ENCODE measurements at regions of chr6 and their contacts with region 1.

Region 1: GRCh38 chr6:10404107-10404798 is 10.6 kb downstream of the TFAP2A start:
- DNase-seq: peak; percentile 90
- ATAC-seq: peak; percentile 94
- H3K4me3 ChIP-seq: peak overlapping the region; percentile 68
- H3K27ac ChIP-seq: peak overlapping the region; percentile 67
- H3K4me1 ChIP-seq: peaks cover 2% of the 10 kb centered on the region
- H3K27me3 ChIP-seq: peaks cover 2% of the 10 kb centered on the region
- CTCF ChIP-seq: peak; percentile 48
- POLR2A ChIP-seq: peak; percentile 30; the same call in 1 of the 2 replicates
- RAD21 ChIP-seq: peak; percentile 45

Region 2: GRCh38 chr6:8435160-8435852 is 1968.9 kb before region 1 on chr6 and contains the start of gene SLC35B3:
- CTCF ChIA-PET with region 1: no interaction called
- POLR2A ChIA-PET with region 1: no interaction called
- dilution Hi-C with region 1: no loop called
- in situ Hi-C with region 1: loop called (anchors 25 kb)
- intact Hi-C with region 1: no loop called
- DNase-seq: peak; percentile 88
- ATAC-seq: peak; percentile 97
- H3K4me3 ChIP-seq: peak within 1 kb of the TSS; percentile 91
- H3K27ac ChIP-seq: peak within 1 kb of the TSS; percentile 94
- H3K4me1 ChIP-seq: peaks cover 11% of the 10 kb centered on the region; the same call in 1 of the 2 replicates
- H3K27me3 ChIP-seq: no peaks in the 10 kb centered on the region
- CTCF ChIP-seq: no peak
- POLR2A ChIP-seq: peak; percentile 89
- RAD21 ChIP-seq: no peak
- total RNA-seq, gene SLC35B3: 19.0 and 33.9 TPM in 2 replicates

Region 3: GRCh38 chr6:9948678-9949077 is 455.6 kb before region 1 on chr6:
- CTCF ChIA-PET with region 1: no interaction called
- POLR2A ChIA-PET with region 1: no interaction called
- dilution Hi-C with region 1: no loop called
- in situ Hi-C with region 1: no loop called
- intact Hi-C with region 1: no loop called
- DNase-seq: no peak
- ATAC-seq: no peak
- H3K4me3 ChIP-seq: no peak overlapping the region
- H3K27ac ChIP-seq: no peak overlapping the region
- H3K4me1 ChIP-seq: no peaks in the 10 kb centered on the region
- H3K27me3 ChIP-seq: no peaks in the 10 kb centered on the region
- CTCF ChIP-seq: no peak
- POLR2A ChIP-seq: no peak
- RAD21 ChIP-seq: no peak

Region 4: DNA sequence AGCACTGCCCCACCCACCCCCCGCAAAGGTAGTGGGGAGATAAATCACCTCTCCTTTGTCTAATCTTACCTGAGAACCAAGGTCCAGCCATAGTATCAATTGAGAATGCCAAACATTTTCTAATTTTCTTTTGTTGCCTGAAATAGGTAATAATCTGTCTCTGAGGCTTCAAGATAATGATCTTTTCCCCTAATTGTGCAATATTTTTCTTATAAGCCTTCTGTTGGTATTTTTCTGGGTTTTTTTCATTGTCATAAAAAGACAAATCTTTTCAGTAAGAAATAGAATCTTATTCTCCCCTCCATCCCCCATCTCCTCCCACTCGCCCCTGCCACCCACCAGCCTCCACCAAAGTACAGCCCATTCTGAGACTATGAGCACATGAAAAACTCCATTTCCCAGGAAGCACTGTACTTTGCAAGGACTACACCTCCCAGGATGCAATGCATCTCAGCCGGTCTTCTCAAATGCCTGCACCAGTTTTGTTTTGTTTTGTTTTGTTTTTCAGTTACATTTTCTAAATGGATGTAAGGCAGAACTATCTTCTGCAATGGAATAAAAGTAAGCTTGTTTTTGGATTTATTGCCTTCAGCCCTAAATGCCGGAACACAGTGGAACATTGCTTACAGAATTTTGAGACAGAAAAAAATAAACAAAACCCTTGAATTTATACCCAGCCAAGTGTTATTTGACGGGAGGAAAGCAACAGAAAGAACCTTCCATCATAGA is 257.4 kb before region 1 on chr6:
- CTCF ChIA-PET with region 1: no interaction called
- POLR2A ChIA-PET with region 1: no interaction called
- dilution Hi-C with region 1: no loop called
- in situ Hi-C with region 1: no loop called
- intact Hi-C with region 1: loop called (anchors 10 kb)
- DNase-seq: peak; percentile 8
- ATAC-seq: peak; percentile 82
- H3K4me3 ChIP-seq: peak overlapping the region; percentile 41; the same call in 1 of the 2 replicates
- H3K27ac ChIP-seq: no peak overlapping the region
- H3K4me1 ChIP-seq: no peaks in the 10 kb centered on the region
- H3K27me3 ChIP-seq: no peaks in the 10 kb centered on the region
- CTCF ChIP-seq: no peak
- POLR2A ChIP-seq: no peak
- RAD21 ChIP-seq: no peak

Region 5: DNA sequence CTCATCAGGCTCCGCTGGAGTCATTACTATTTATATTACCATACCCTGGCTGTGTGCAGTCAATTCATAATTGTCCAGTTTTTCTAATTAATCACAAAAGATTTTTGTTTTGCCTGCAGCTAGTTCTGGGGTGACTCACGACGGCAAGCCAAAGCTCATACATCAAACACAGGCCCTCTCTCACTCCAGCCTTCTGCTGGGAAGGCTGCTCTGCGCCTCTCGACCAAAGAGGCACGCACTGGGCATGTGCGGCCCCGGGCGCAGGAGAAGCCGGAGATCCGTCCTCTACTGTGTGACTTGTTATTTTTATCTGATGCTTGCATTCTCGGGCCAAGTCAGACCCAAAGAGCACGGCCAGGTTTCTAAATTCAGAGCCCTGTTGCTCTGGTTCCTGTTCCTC is 87.9 kb before region 1 on chr6:
- CTCF ChIA-PET with region 1: no interaction called
- POLR2A ChIA-PET with region 1: no interaction called
- dilution Hi-C with region 1: no loop called
- in situ Hi-C with region 1: no loop called
- intact Hi-C with region 1: loop called (anchors 5 kb)
- DNase-seq: peak; percentile 72
- ATAC-seq: peak; percentile 98
- H3K4me3 ChIP-seq: no peak overlapping the region
- H3K27ac ChIP-seq: no peak overlapping the region
- H3K4me1 ChIP-seq: no peaks in the 10 kb centered on the region
- H3K27me3 ChIP-seq: no peaks in the 10 kb centered on the region
- CTCF ChIP-seq: no peak
- POLR2A ChIP-seq: no peak
- RAD21 ChIP-seq: no peak